ENCODE measurements at regions of chr13 and their contacts with region 1.

Region 1: GRCh38 chr13:33228648-33229445 is 56.7 kb downstream of the STARD13 start:
- DNase-seq: peak; percentile 41 to 43
- H3K4me3 ChIP-seq: no peak overlapping the region
- H3K27ac ChIP-seq: peak overlapping the region; percentile 20 to 76 (median 76)
- H3K4me1 ChIP-seq: peaks cover 51 to 57% of the 10 kb centered on the region in 2 donors
- H3K27me3 ChIP-seq: no peaks in the 10 kb centered on the region
- CTCF ChIP-seq: peak; percentile 48 to 95 (median 84)
- POLR2A ChIP-seq: no peak

Region 2: GRCh38 chr13:33125821-33126570 is 102.9 kb before region 1 on chr13:
- intact Hi-C with region 1: loop called (anchors 10 kb)
- DNase-seq: peak; percentile 74 to 80
- H3K4me3 ChIP-seq: no peak overlapping the region
- H3K27ac ChIP-seq: peak overlapping the region; percentile 80 to 88 (median 84)
- H3K4me1 ChIP-seq: peaks cover 51 to 69% of the 10 kb centered on the region in 2 donors
- H3K27me3 ChIP-seq: no peaks in the 10 kb centered on the region
- CTCF ChIP-seq: no peak
- POLR2A ChIP-seq: peak in 1 of 2 donors; percentile 26

Region 3: GRCh38 chr13:33285420-33286124 is 56.7 kb after region 1 on chr13 and contains the start of gene STARD13:
- intact Hi-C with region 1: loop called (anchors 10 kb)
- DNase-seq: peak; percentile 96 to 97
- H3K4me3 ChIP-seq: peak within 1 kb of the TSS; percentile 44 to 62 (median 49)
- H3K27ac ChIP-seq: peak within 1 kb of the TSS; percentile 87 to 95 (median 94)
- H3K4me1 ChIP-seq: peaks cover 20 to 42% of the 10 kb centered on the region in 2 donors
- H3K27me3 ChIP-seq: no peaks in the 10 kb centered on the region
- CTCF ChIP-seq: peak in 4 of 6 experiments; percentile 39 to 59 (median 55)
- POLR2A ChIP-seq: peak; percentile 82 to 96
- total RNA-seq, gene STARD13: 52.0 to 114 (median 89.2) TPM

Region 4: GRCh38 chr13:33401238-33401637 is 172.4 kb after region 1 on chr13:
- intact Hi-C with region 1: loop called (anchors 10 kb)
- DNase-seq: peak; percentile 89 to 91
- H3K4me3 ChIP-seq: no peak overlapping the region
- H3K27ac ChIP-seq: peak overlapping the region; percentile 86 to 94 (median 90)
- H3K4me1 ChIP-seq: peaks cover 40 to 46% of the 10 kb centered on the region in 2 donors
- H3K27me3 ChIP-seq: no peaks in the 10 kb centered on the region
- CTCF ChIP-seq: no peak
- POLR2A ChIP-seq: peak in 1 of 2 donors; percentile 26

Region 5: DNA sequence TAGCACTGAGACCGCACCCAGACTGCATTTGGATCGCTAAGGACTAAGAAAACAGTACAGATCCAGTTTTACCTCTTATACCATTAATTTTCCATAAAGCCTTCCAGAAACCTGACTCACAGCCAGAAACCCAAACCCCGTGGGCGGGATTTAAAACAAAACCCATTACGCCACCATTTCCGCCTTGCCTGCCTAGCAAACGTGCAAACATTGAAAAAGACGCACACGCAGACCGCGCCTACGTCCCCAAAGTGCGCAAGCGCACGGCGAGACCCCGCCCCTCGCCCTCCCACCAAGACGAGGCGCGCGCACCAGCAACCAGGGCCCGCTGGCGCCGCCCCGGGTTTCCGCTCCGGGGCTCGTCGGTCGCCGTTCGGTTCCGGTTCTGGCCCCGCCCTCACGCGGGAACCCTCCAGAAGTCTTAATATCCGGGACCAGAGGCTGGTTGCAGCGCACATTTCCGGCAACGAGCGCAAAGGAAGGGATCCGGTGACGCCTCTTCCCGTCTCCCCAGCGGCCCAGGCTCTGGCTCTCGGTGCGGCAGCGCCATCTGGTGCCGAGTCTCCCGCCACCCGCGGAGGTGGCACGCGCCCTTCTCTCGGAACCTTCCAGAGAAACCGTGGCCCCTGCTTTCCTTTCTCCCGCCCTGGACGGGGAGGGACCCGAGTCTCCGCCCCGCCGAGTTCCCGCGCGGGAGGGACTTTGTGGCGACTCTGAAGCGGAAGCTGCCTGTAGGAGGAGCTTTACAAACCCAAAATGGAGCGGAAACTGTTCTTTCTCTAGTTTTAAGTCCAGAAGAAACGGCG is 313.6 kb after region 1 on chr13:
- intact Hi-C with region 1: loop called (anchors 10 kb)
- DNase-seq: peak; percentile 99
- H3K4me3 ChIP-seq: peak overlapping the region in 2 of 3 donors; percentile 31 to 35
- H3K27ac ChIP-seq: peak overlapping the region; percentile 96 to 98 (median 96)
- H3K4me1 ChIP-seq: peaks cover 13 to 18% of the 10 kb centered on the region in 2 donors
- H3K27me3 ChIP-seq: no peaks in the 10 kb centered on the region
- CTCF ChIP-seq: peak; percentile 64 to 99 (median 90)
- POLR2A ChIP-seq: peak in 1 of 2 donors; percentile 81